Activated CD4-positive, alpha-beta memory T cell treated with anti-CD3 and anti-CD28 coated beads, Interleukin-2, amount 10 ng/mL, durations not matched to agents 7 days and 5 days (primary cell): ENCODE measurements at regions of chr2 and their contacts with region 1.

Region 1: GRCh38 chr2:189142893-189143759 is 36.4 kb downstream of the COL5A2 start:
- DNase-seq: peak; percentile 35
- H3K4me3 Mint-ChIP-seq: no peak overlapping the region
- H3K27ac Mint-ChIP-seq: no peak overlapping the region
- H3K4me1 Mint-ChIP-seq: no peaks in the 10 kb centered on the region
- H3K27me3 Mint-ChIP-seq: no peaks in the 10 kb centered on the region

Region 2: GRCh38 chr2:189014449-189015138 is 128.5 kb before region 1 on chr2:
- CTCF ChIA-PET with region 1: no interaction called
- POLR2A ChIA-PET with region 1: no interaction called
- DNase-seq: no peak
- H3K4me3 Mint-ChIP-seq: no peak overlapping the region
- H3K27ac Mint-ChIP-seq: no peak overlapping the region
- H3K4me1 Mint-ChIP-seq: no peaks in the 10 kb centered on the region
- H3K27me3 Mint-ChIP-seq: no peaks in the 10 kb centered on the region

Region 3: GRCh38 chr2:189116979-189117378 is 26.1 kb before region 1 on chr2:
- CTCF ChIA-PET with region 1: interaction called, 11 read pairs
- POLR2A ChIA-PET with region 1: no interaction called
- DNase-seq: no peak
- H3K4me3 Mint-ChIP-seq: no peak overlapping the region
- H3K27ac Mint-ChIP-seq: no peak overlapping the region
- H3K4me1 Mint-ChIP-seq: no peaks in the 10 kb centered on the region
- H3K27me3 Mint-ChIP-seq: no peaks in the 10 kb centered on the region

Region 4: GRCh38 chr2:189153619-189154018 is 10.5 kb after region 1 on chr2:
- CTCF ChIA-PET with region 1: interaction called, 13 read pairs
- POLR2A ChIA-PET with region 1: no interaction called
- DNase-seq: no peak
- H3K4me3 Mint-ChIP-seq: no peak overlapping the region
- H3K27ac Mint-ChIP-seq: no peak overlapping the region
- H3K4me1 Mint-ChIP-seq: no peaks in the 10 kb centered on the region
- H3K27me3 Mint-ChIP-seq: no peaks in the 10 kb centered on the region

Region 5: GRCh38 chr2:189412330-189412953 is 269.3 kb after region 1 on chr2:
- CTCF ChIA-PET with region 1: interaction called, 22 read pairs
- POLR2A ChIA-PET with region 1: no interaction called
- DNase-seq: peak; percentile 50
- H3K4me3 Mint-ChIP-seq: no peak overlapping the region
- H3K27ac Mint-ChIP-seq: no peak overlapping the region
- H3K4me1 Mint-ChIP-seq: peaks cover 8% of the 10 kb centered on the region
- H3K27me3 Mint-ChIP-seq: no peaks in the 10 kb centered on the region

Region 6: GRCh38 chr2:189492451-189492850 is 349.3 kb after region 1 on chr2:
- CTCF ChIA-PET with region 1: no interaction called
- POLR2A ChIA-PET with region 1: no interaction called
- DNase-seq: no peak
- H3K4me3 Mint-ChIP-seq: no peak overlapping the region
- H3K27ac Mint-ChIP-seq: no peak overlapping the region
- H3K4me1 Mint-ChIP-seq: no peaks in the 10 kb centered on the region
- H3K27me3 Mint-ChIP-seq: peaks cover 4% of the 10 kb centered on the region